HAP-1 (cell line): ENCODE measurements at regions of chrX and their contacts with region 1.

Region 1: GRCh38 chrX:100685284-100685996 is 41.4 kb downstream of the SRPX2 start:
- DNase-seq: peak; percentile 78 to 86
- H3K4me3 ChIP-seq: no peak overlapping the region
- H3K4me1 ChIP-seq: no peaks in the 10 kb centered on the region
- H3K27me3 ChIP-seq: no peaks in the 10 kb centered on the region

Region 2: DNA sequence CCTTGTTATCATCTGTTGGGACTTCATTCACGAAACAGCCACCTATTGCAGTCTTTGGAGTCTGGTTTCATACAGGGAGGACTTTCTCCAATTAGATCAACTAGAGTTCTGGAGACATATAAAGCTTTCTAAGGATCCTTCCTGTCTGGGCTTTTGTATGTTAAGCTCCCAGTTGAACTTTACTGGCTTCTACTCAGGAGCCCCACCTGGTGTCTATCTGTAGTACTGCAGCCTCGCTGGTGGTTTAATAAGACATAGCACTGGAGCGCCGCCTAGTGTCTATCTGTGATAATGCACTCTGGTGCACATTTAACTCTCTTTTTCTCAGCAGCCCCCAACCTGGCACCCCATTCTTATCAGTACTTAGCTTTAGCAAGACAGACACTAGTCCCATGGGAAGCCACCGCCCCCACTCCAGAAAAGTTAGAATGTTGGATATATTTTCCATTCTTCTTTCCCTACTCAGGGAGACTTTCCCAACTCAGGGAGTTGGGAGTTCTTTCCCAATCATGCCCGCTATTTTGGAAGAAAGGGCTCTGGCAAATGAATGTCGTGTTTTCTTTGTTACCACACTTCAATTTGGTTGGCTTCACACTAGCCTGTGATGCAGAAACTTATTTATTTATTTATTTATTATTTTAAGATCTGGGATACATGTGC is 83.4 kb after region 1 on chrX:
- in situ Hi-C with region 1: loop called (anchors 5 kb)
- DNase-seq: peak; percentile 80 to 97
- H3K4me3 ChIP-seq: no peak overlapping the region
- H3K4me1 ChIP-seq: no peaks in the 10 kb centered on the region
- H3K27me3 ChIP-seq: peaks cover 31% of the 10 kb centered on the region